CD4-positive, alpha-beta T cell (primary cell): ENCODE measurements at regions of chr20 and their contacts with region 1.

Region 1: GRCh38 chr20:20052074-20052970 is at the starts of genes CFAP61 and CRNKL1:
- DNase-seq: peak; percentile 94 to 100 (median 97)
- ATAC-seq: peak; percentile 93
- H3K4me3 ChIP-seq: peak within 1 kb of the TSS; percentile 91
- H3K4me3 Mint-ChIP-seq: peak within 1 kb of the TSS; percentile 98
- H3K27ac ChIP-seq: peak within 1 kb of the TSS; percentile 80 to 91
- H3K27ac Mint-ChIP-seq: peak within 1 kb of the TSS; percentile 89
- H3K4me1 ChIP-seq: peaks cover 7% of the 10 kb centered on the region
- H3K4me1 Mint-ChIP-seq: peaks cover 37% of the 10 kb centered on the region
- H3K27me3 ChIP-seq: no peaks in the 10 kb centered on the region
- H3K27me3 Mint-ChIP-seq: peaks cover 6% of the 10 kb centered on the region
- CTCF ChIP-seq: no peak
- total RNA-seq, gene CFAP61: not detected
- total RNA-seq, gene CRNKL1: 24.3 to 26.1 TPM

Region 2: GRCh38 chr20:18507218-18508021 is 1544.9 kb before region 1 on chr20 and contains the start of gene SEC23B:
- CTCF ChIA-PET with region 1: no interaction called
- POLR2A ChIA-PET with region 1: interaction called, 10 read pairs
- intact Hi-C with region 1: no loop called
- DNase-seq: peak; percentile 94 to 99 (median 98)
- ATAC-seq: peak; percentile 81
- H3K4me3 ChIP-seq: peak within 1 kb of the TSS; percentile 86
- H3K4me3 Mint-ChIP-seq: peak within 1 kb of the TSS; percentile 98
- H3K27ac ChIP-seq: peak within 1 kb of the TSS; percentile 94 to 99
- H3K27ac Mint-ChIP-seq: peak within 1 kb of the TSS; percentile 100
- H3K4me1 ChIP-seq: peaks cover 26% of the 10 kb centered on the region
- H3K4me1 Mint-ChIP-seq: peaks cover 52% of the 10 kb centered on the region
- H3K27me3 ChIP-seq: peaks cover 0 to 2% of the 10 kb centered on the region in 2 experiments
- H3K27me3 Mint-ChIP-seq: no peaks in the 10 kb centered on the region
- CTCF ChIP-seq: no peak
- total RNA-seq, gene SEC23B: 29.2 to 32.8 TPM

Region 3: GRCh38 chr20:19995220-19995863 is 57.0 kb before region 1 on chr20:
- CTCF ChIA-PET with region 1: no interaction called
- POLR2A ChIA-PET with region 1: no interaction called
- intact Hi-C with region 1: loop called in 1 of 2 experiments (anchors 10 kb)
- DNase-seq: peak in 7 of 14 experiments; percentile 6 to 73 (median 54)
- ATAC-seq: peak; percentile 61
- H3K4me3 ChIP-seq: no peak overlapping the region
- H3K4me3 Mint-ChIP-seq: no peak overlapping the region
- H3K27ac ChIP-seq: no peak overlapping the region
- H3K27ac Mint-ChIP-seq: no peak overlapping the region
- H3K4me1 ChIP-seq: no peaks in the 10 kb centered on the region
- H3K4me1 Mint-ChIP-seq: no peaks in the 10 kb centered on the region
- H3K27me3 ChIP-seq: no peaks in the 10 kb centered on the region
- H3K27me3 Mint-ChIP-seq: peaks cover 23% of the 10 kb centered on the region
- CTCF ChIP-seq: peak; percentile 81

Region 4: DNA sequence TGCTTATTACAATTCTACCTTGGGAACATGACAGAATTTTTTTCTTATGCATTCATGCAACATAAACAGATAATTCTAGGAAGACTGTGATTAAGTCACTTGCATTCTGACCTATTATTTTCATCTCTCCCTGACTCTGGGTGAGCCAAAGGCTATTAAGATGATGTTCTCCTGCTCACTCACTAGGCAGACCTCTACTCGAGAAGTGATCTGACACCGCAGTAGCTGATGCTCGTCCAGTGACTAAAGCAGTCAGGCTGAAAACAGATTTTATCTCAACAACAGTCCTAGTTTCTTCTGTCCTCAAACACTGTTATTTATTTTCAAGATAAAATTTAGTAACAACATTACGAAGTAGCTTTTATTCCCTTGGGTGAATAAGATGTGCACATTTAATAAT is 17.8 kb before region 1 on chr20:
- CTCF ChIA-PET with region 1: interaction called, 4 read pairs
- POLR2A ChIA-PET with region 1: interaction called, 21 read pairs
- intact Hi-C with region 1: no loop called
- DNase-seq: no peak
- ATAC-seq: no peak
- H3K4me3 ChIP-seq: no peak overlapping the region
- H3K4me3 Mint-ChIP-seq: no peak overlapping the region
- H3K27ac ChIP-seq: no peak overlapping the region
- H3K27ac Mint-ChIP-seq: no peak overlapping the region
- H3K4me1 ChIP-seq: no peaks in the 10 kb centered on the region
- H3K4me1 Mint-ChIP-seq: no peaks in the 10 kb centered on the region
- H3K27me3 ChIP-seq: no peaks in the 10 kb centered on the region
- H3K27me3 Mint-ChIP-seq: no peaks in the 10 kb centered on the region
- CTCF ChIP-seq: no peak

Region 5: DNA sequence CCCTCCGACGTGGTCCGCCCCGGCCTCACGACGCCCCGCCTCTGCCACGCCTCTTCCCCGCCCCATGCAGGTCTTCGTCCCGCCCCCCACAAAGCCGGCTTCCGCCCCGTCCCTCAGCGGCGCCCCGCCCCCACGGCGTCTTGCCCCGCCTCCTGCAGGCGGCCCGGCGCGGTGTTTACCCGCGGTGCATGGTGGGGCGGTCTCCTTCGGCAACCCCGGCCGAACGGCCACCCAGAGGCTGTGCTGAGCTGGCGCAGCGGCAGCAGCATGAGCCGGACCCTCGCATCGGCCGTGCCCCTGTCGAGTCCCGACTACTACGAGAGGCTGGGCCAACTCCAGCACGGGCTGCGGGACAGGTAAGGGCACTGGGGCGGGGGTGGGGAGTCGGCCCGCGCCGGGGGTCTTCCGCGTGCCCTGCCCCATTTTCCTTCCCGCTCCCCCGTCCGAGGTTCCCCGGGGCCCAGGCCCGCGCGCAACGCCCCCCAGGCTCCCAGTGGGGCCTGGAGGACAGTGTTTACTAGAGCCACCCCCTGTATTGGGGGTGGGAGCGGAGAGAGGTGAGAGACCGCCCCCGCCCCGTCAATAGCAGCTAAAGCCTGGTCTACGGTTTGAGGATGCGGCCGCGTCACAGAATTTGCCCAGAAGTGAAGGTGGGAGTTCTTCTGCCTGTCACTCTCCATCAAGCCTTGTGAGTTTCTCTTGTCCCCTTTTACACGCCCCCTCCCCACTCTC is 1073.7 kb after region 1 on chr20 and contains the start of gene KIZ:
- CTCF ChIA-PET with region 1: no interaction called
- POLR2A ChIA-PET with region 1: no interaction called
- intact Hi-C with region 1: loop called in 1 of 2 experiments (anchors 5 kb)
- DNase-seq: peak; percentile 91 to 99 (median 97)
- ATAC-seq: peak; percentile 93
- H3K4me3 ChIP-seq: peak within 1 kb of the TSS; percentile 78
- H3K4me3 Mint-ChIP-seq: peak within 1 kb of the TSS; percentile 88
- H3K27ac ChIP-seq: peak within 1 kb of the TSS; percentile 28 to 42
- H3K27ac Mint-ChIP-seq: peak within 1 kb of the TSS; percentile 74
- H3K4me1 ChIP-seq: peaks cover 14% of the 10 kb centered on the region
- H3K4me1 Mint-ChIP-seq: peaks cover 32% of the 10 kb centered on the region
- H3K27me3 ChIP-seq: no peaks in the 10 kb centered on the region
- H3K27me3 Mint-ChIP-seq: peaks cover 4% of the 10 kb centered on the region
- CTCF ChIP-seq: peak; percentile 24
- total RNA-seq, gene KIZ: 31.1 to 33.8 TPM